ENCODE measurements at regions of chr2 and their contacts with region 1.

Region 1: GRCh38 chr2:128736689-128737545 is 418.2 kb upstream of the HS6ST1 start:
- DNase-seq: peak; percentile 71
- H3K4me3 ChIP-seq: peak overlapping the region; percentile 6 to 21
- H3K27ac ChIP-seq: no peak overlapping the region
- H3K4me1 ChIP-seq: peaks cover 6% of the 10 kb centered on the region
- H3K27me3 ChIP-seq: no peaks in the 10 kb centered on the region
- CTCF ChIP-seq: peak; percentile 92 to 95 (median 94)
- POLR2A ChIP-seq: no peak

Region 2: GRCh38 chr2:126902152-126902835 is 1834.6 kb before region 1 on chr2:
- intact Hi-C with region 1: no loop called
- DNase-seq: no peak
- H3K4me3 ChIP-seq: no peak overlapping the region
- H3K27ac ChIP-seq: no peak overlapping the region
- H3K4me1 ChIP-seq: no peaks in the 10 kb centered on the region
- H3K27me3 ChIP-seq: no peaks in the 10 kb centered on the region
- CTCF ChIP-seq: no peak
- POLR2A ChIP-seq: no peak

Region 3: DNA sequence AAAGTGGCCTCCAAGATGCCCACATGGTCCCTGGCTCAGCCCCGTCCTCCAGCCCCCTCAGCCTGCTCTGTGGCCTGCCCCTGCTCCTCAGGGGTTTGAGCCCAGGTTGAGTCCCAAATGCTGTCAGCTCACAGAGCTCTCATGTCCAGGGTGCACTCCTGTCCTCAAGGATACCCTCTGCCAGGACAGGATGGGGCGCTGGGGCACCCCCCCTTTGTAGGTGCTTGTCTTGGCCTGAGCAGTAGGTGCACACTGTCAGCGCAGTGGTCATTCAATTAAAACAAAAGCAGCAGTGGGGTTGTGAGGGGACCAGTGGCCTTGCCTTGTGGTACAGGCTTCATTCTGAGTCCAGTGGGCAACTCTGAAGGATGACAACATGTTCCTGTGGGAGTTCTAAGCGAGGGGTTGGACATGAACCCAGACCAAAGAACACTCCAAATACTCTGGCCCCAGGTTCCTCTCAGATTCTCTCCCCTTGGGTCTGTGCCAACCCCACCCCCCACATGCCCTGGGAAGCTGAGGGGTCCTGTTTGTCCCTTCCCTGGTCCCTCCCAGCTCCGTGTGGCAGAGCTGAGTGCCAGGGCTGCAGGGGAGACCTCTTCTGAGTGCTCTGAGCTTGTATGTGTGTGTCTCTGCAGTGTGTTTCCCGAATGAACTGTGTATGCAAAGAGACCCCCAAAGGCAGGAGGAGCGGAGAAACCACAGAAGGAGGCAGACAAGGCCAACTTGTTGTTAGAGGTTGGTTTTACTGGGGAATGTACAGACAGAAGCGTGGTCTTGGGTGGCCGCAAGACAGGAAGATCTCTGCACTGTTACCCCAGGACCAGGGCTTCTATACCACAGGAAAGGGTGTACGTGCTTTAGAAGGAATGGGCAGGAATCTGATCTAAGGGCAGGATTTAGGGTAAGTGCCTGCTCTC is 262.6 kb before region 1 on chr2:
- intact Hi-C with region 1: no loop called
- DNase-seq: no peak
- H3K4me3 ChIP-seq: no peak overlapping the region
- H3K27ac ChIP-seq: no peak overlapping the region
- H3K4me1 ChIP-seq: no peaks in the 10 kb centered on the region
- H3K27me3 ChIP-seq: no peaks in the 10 kb centered on the region
- CTCF ChIP-seq: no peak
- POLR2A ChIP-seq: no peak

Region 4: GRCh38 chr2:128797937-128798336 is 61.0 kb after region 1 on chr2:
- intact Hi-C with region 1: no loop called
- DNase-seq: no peak
- H3K4me3 ChIP-seq: no peak overlapping the region
- H3K27ac ChIP-seq: no peak overlapping the region
- H3K4me1 ChIP-seq: no peaks in the 10 kb centered on the region
- H3K27me3 ChIP-seq: no peaks in the 10 kb centered on the region
- CTCF ChIP-seq: no peak
- POLR2A ChIP-seq: no peak

Region 5: GRCh38 chr2:129396980-129397599 is 660.2 kb after region 1 on chr2:
- intact Hi-C with region 1: loop called (anchors 10 kb)
- DNase-seq: peak; percentile 61
- H3K4me3 ChIP-seq: no peak overlapping the region
- H3K27ac ChIP-seq: no peak overlapping the region
- H3K4me1 ChIP-seq: no peaks in the 10 kb centered on the region
- H3K27me3 ChIP-seq: no peaks in the 10 kb centered on the region
- CTCF ChIP-seq: peak; percentile 14 to 76 (median 62)
- POLR2A ChIP-seq: no peak

Region 6: GRCh38 chr2:129849559-129850160 is 1112.7 kb after region 1 on chr2:
- intact Hi-C with region 1: loop called (anchors 5 kb)
- DNase-seq: no peak
- H3K4me3 ChIP-seq: no peak overlapping the region
- H3K27ac ChIP-seq: no peak overlapping the region
- H3K4me1 ChIP-seq: no peaks in the 10 kb centered on the region
- H3K27me3 ChIP-seq: no peaks in the 10 kb centered on the region
- CTCF ChIP-seq: peak; percentile 38 to 82 (median 73)
- POLR2A ChIP-seq: no peak

Measured in prostate gland (tissue), 2 donors.